H1 (cell line): ENCODE measurements at regions of chr19 and their contacts with region 1.

Region 1: GRCh38 chr19:10636304-10636972 is 11.1 kb downstream of the SLC44A2 start:
- DNase-seq: peak in 1 of 2 experiments; percentile 57
- H3K4me3 ChIP-seq: no peak overlapping the region
- H3K27ac ChIP-seq: no peak overlapping the region
- H3K4me1 ChIP-seq: no peaks in the 10 kb centered on the region; a peak in 1 of 7 replicates
- H3K27me3 ChIP-seq: no peaks in the 10 kb centered on the region
- CTCF ChIP-seq: no peak
- EP300 ChIP-seq: no peak
- POLR2A ChIP-seq: no peak
- RAD21 ChIP-seq: no peak

Region 2: GRCh38 chr19:10551698-10552301 is 84.6 kb before region 1 on chr19:
- CTCF ChIA-PET with region 1: no interaction called
- POLR2A ChIA-PET with region 1: no interaction called
- DNase-seq: no peak
- H3K4me3 ChIP-seq: no peak overlapping the region
- H3K27ac ChIP-seq: no peak overlapping the region
- H3K4me1 ChIP-seq: no peaks in the 10 kb centered on the region
- H3K27me3 ChIP-seq: no peaks in the 10 kb centered on the region
- CTCF ChIP-seq: peak; percentile 45 to 58 (median 51)
- EP300 ChIP-seq: no peak
- POLR2A ChIP-seq: no peak
- RAD21 ChIP-seq: peak; percentile 52 to 64

Region 3: GRCh38 chr19:10625003-10625776 is 11.2 kb before region 1 on chr19 and contains the start of gene SLC44A2:
- CTCF ChIA-PET with region 1: interaction called, 4 read pairs
- POLR2A ChIA-PET with region 1: interaction called, 17 read pairs
- DNase-seq: peak in 1 of 2 experiments; percentile 90
- H3K4me3 ChIP-seq: peak within 1 kb of the TSS; percentile 84 to 92 (median 87)
- H3K27ac ChIP-seq: peak within 1 kb of the TSS; percentile 83
- H3K4me1 ChIP-seq: peaks cover 4 to 9% (median 8%) of the 10 kb centered on the region in 4 experiments
- H3K27me3 ChIP-seq: no peaks in the 10 kb centered on the region
- CTCF ChIP-seq: peak in 1 of 3 experiments; percentile 8; a peak in 1 of 4 replicates
- EP300 ChIP-seq: peak in 1 of 2 experiments; percentile 84; a peak in 1 of 3 replicates
- POLR2A ChIP-seq: peak; percentile 62 to 98
- RAD21 ChIP-seq: peak in 1 of 2 experiments; percentile 6; a peak in 1 of 4 replicates
- total RNA-seq, gene SLC44A2: 118 and 120 TPM in 2 replicates

Region 4: GRCh38 chr19:10797541-10798256 is 161.3 kb after region 1 on chr19:
- CTCF ChIA-PET with region 1: no interaction called
- POLR2A ChIA-PET with region 1: no interaction called
- DNase-seq: no peak
- H3K4me3 ChIP-seq: no peak overlapping the region
- H3K27ac ChIP-seq: no peak overlapping the region
- H3K4me1 ChIP-seq: no peaks in the 10 kb centered on the region
- H3K27me3 ChIP-seq: no peaks in the 10 kb centered on the region
- CTCF ChIP-seq: no peak
- EP300 ChIP-seq: no peak
- POLR2A ChIP-seq: no peak
- RAD21 ChIP-seq: no peak